ENCODE measurements at regions of chr1 and their contacts with region 1.

Region 1: GRCh38 chr1:238914346-238914745 is 472.0 kb upstream of the CHRM3 start:
- DNase-seq: no peak

Region 2: DNA sequence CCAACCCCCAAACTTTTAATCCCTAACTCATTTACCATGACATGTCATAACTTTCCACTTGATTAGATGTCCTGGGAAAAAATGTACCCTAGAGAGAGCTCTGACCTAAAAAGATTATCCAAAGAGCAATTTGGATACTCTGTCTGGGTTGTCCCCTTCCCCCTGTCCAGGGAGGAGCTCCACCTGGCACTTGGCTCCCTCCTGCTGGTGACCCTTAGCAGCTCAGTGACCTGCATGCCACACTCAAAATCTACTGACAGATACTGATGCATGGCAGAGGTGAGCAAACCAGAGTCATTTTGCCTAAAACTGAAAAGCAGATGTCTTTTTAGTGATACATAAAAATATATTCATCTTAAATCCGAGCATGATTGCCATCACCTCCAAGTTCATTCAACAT is 29.7 kb after region 1 on chr1:
- intact Hi-C with region 1: loop called in 1 of 2 experiments (anchors 2 kb)
- DNase-seq: no peak

Measured in posterior vena cava (tissue), 2 donors.